ENCODE measurements at regions of chr1 and their contacts with region 1.

Region 1: GRCh38 chr1:193121616-193122593 is at the start of gene CDC73:
- DNase-seq: peak; percentile 95 to 98 (median 96)
- ATAC-seq: peak; percentile 82
- H3K4me3 ChIP-seq: peak within 1 kb of the TSS; percentile 65
- H3K27ac ChIP-seq: peak within 1 kb of the TSS; percentile 97
- H3K4me1 ChIP-seq: peaks cover 12 to 21% of the 10 kb centered on the region in 2 experiments; a peak in 4 of 5 replicates
- H3K27me3 ChIP-seq: no peaks in the 10 kb centered on the region
- CTCF ChIP-seq: peak; percentile 93 to 96 (median 95)
- EP300 ChIP-seq: peak; percentile 53; the same call in 1 of the 2 replicates
- POLR2A ChIP-seq: peak; percentile 98
- RAD21 ChIP-seq: peak; percentile 90 to 93
- polyA plus RNA-seq, gene CDC73: 23.7 to 28.7 TPM

Region 2: DNA sequence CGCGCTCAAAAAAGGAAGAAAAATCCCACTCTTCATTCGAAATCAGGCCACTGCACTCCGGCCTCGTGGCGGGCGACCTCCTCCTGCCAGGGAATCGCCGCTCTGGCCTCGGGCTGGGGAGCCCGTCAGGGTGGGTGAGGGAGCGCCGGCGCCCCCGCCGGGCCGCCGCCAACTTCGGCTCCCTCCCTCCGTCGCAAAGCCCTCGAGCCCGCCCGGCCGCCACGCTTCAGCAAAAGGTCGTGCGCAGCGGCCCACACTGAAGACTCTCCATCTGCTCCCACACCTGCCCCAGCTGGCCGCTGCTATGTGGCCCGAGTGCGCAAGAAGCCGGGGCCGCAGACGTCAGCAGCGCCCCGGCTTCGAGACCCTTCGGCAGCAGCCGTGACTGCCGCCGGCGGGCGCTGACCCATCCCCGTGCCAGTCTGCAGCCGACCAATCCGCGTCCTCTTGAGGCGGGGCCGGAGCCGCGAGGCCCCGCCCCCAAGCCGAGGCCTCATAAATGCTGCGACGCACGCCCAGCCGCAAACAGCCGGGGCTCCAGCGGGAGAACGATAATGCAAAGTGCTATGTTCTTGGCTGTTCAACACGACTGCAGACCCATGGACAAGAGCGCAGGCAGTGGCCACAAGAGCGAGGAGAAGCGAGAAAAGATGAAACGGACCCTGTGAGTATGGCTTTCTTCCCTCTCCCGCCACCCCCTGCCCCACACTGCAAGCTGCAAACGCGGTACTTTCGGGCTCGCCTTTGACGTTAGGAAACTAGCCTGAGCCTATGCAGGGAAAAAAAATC is 313.2 kb before region 1 on chr1 and contains the start of gene RGS2:
- CTCF ChIA-PET with region 1: no interaction called
- POLR2A ChIA-PET with region 1: no interaction called
- in situ Hi-C with region 1: no loop called
- intact Hi-C with region 1: loop called (anchors 2 kb)
- DNase-seq: peak; percentile 93 to 98 (median 98)
- ATAC-seq: peak; percentile 99
- H3K4me3 ChIP-seq: peak within 1 kb of the TSS; percentile 63
- H3K27ac ChIP-seq: peak within 1 kb of the TSS; percentile 24; the same call in 1 of the 3 replicates
- H3K4me1 ChIP-seq: peaks cover 6 to 14% of the 10 kb centered on the region in 2 experiments; a peak in 4 of 5 replicates
- H3K27me3 ChIP-seq: no peaks in the 10 kb centered on the region
- CTCF ChIP-seq: peak in 1 of 3 experiments; percentile 1; a peak in 1 of 6 replicates
- EP300 ChIP-seq: no peak
- POLR2A ChIP-seq: peak; percentile 96
- RAD21 ChIP-seq: no peak; a peak in 1 of 4 replicates
- polyA plus RNA-seq, gene RGS2: 4.7 to 5.4 TPM

Region 3: DNA sequence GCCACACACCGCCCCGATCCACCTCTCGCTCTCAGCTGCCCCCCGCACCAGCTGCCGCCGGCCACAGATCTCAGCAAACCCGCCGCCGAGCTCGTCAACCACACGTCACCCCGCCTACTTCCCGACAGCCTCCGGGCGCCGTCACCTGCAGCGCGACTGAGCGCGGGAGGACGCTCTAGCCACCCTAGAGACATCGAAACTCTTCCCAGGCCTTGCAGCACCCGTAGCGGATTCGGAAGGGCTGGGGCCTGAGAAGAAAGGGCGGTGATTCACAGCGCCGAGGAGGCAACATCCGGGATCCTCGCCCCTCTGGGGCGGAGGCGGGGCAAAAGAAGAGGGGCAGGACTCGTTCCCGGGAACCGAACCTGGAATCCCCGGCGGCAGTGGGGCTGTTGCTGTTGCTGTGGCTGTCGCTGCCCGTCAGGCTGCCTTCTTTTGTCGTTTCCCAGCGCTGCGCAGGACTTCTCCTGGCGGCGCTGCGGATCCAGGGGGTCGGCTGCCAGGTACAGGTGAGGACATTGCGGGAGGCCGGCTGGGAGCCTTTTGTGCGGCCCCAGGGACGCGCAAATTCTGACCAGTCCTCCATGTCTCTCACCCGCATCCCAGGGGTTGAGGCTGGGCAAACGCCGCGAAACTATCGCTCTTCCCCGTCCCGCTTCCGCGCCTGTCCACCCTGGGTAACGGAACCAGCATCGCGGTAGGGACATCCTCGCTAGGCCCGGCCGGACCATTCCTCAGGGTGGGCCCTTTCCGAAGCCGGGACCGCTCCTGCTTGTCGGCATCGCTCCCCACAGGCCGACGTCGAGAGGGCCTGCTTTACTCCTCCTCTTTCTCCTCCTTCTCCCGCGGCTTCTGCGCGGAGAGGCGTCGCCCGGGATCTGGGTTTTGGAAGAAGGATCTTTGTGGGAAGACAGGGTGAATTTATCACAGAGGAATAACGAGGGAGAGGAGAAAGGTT is 62.4 kb before region 1 on chr1 and contains the starts of genes RO60 and UCHL5:
- CTCF ChIA-PET with region 1: interaction called, 3 read pairs
- POLR2A ChIA-PET with region 1: interaction called, 10 read pairs
- in situ Hi-C with region 1: no loop called
- intact Hi-C with region 1: loop called (anchors 1 kb)
- DNase-seq: peak; percentile 89 to 99 (median 92)
- ATAC-seq: peak; percentile 87
- H3K4me3 ChIP-seq: peak within 1 kb of the TSS; percentile 81
- H3K27ac ChIP-seq: peak within 1 kb of the TSS; percentile 94
- H3K4me1 ChIP-seq: peaks cover 10 to 25% of the 10 kb centered on the region in 2 experiments; a peak in 4 of 5 replicates
- H3K27me3 ChIP-seq: no peaks in the 10 kb centered on the region
- CTCF ChIP-seq: peak in 2 of 3 experiments; percentile 26 to 36; a peak in 2 of 6 replicates
- EP300 ChIP-seq: peak; percentile 65
- POLR2A ChIP-seq: peak; percentile 98
- RAD21 ChIP-seq: peak in 1 of 2 experiments; percentile 5; a peak in 1 of 4 replicates
- polyA plus RNA-seq, gene RO60: 49.2 to 187 TPM
- polyA plus RNA-seq, gene UCHL5: 61.0 to 68.9 TPM

Region 4: GRCh38 chr1:193069748-193070385 is 52.0 kb before region 1 on chr1:
- CTCF ChIA-PET with region 1: interaction called, 3 read pairs
- POLR2A ChIA-PET with region 1: interaction called, 3 read pairs
- in situ Hi-C with region 1: no loop called
- intact Hi-C with region 1: loop called (anchors 2 kb)
- DNase-seq: peak; percentile 56 to 63 (median 60)
- ATAC-seq: peak; percentile 59
- H3K4me3 ChIP-seq: no peak overlapping the region
- H3K27ac ChIP-seq: peak overlapping the region; percentile 80; the same call in 2 of the 3 replicates
- H3K4me1 ChIP-seq: peaks cover 15 to 49% of the 10 kb centered on the region in 2 experiments
- H3K27me3 ChIP-seq: no peaks in the 10 kb centered on the region
- CTCF ChIP-seq: peak; percentile 67 to 81 (median 74)
- EP300 ChIP-seq: no peak
- POLR2A ChIP-seq: no peak
- RAD21 ChIP-seq: no peak; a peak in 1 of 4 replicates

Region 5: GRCh38 chr1:193104906-193105820 is 16.7 kb before region 1 on chr1 and contains the start of gene GLRX2:
- CTCF ChIA-PET with region 1: interaction called, 3 read pairs
- POLR2A ChIA-PET with region 1: interaction called, 16 read pairs
- in situ Hi-C with region 1: no loop called
- intact Hi-C with region 1: loop called (anchors 1 kb)
- DNase-seq: peak; percentile 97 to 98 (median 98)
- ATAC-seq: peak; percentile 91
- H3K4me3 ChIP-seq: peak within 1 kb of the TSS; percentile 73
- H3K27ac ChIP-seq: peak within 1 kb of the TSS; percentile 79
- H3K4me1 ChIP-seq: peaks cover 10 to 18% of the 10 kb centered on the region in 2 experiments; a peak in 4 of 5 replicates
- H3K27me3 ChIP-seq: no peaks in the 10 kb centered on the region
- CTCF ChIP-seq: peak in 1 of 3 experiments; percentile 14; a peak in 2 of 6 replicates
- EP300 ChIP-seq: peak; percentile 42; the same call in 1 of the 2 replicates
- POLR2A ChIP-seq: peak; percentile 84
- RAD21 ChIP-seq: peak; percentile 24 to 45; a peak in 3 of 4 replicates
- polyA plus RNA-seq, gene GLRX2: 13.3 to 16.8 TPM

Region 6: GRCh38 chr1:193111641-193112090 is 10.2 kb before region 1 on chr1:
- CTCF ChIA-PET with region 1: interaction called, 3 read pairs
- POLR2A ChIA-PET with region 1: interaction called, 7 read pairs
- in situ Hi-C with region 1: no loop called
- intact Hi-C with region 1: loop called (anchors 1 kb)
- DNase-seq: peak in 1 of 4 experiments; percentile 76
- ATAC-seq: peak; percentile 40
- H3K4me3 ChIP-seq: no peak overlapping the region
- H3K27ac ChIP-seq: peak overlapping the region; percentile 56
- H3K4me1 ChIP-seq: peaks cover 16 to 35% of the 10 kb centered on the region in 2 experiments
- H3K27me3 ChIP-seq: no peaks in the 10 kb centered on the region
- CTCF ChIP-seq: no peak
- EP300 ChIP-seq: peak; percentile 48; the same call in 1 of the 2 replicates
- POLR2A ChIP-seq: no peak
- RAD21 ChIP-seq: no peak

Region 7: GRCh38 chr1:193140254-193140653 is 18.3 kb after region 1 on chr1:
- CTCF ChIA-PET with region 1: no interaction called
- POLR2A ChIA-PET with region 1: interaction called, 18 read pairs
- in situ Hi-C with region 1: no loop called
- intact Hi-C with region 1: no loop called
- DNase-seq: no peak
- ATAC-seq: no peak
- H3K4me3 ChIP-seq: no peak overlapping the region
- H3K27ac ChIP-seq: no peak overlapping the region
- H3K4me1 ChIP-seq: no peaks in the 10 kb centered on the region
- H3K27me3 ChIP-seq: no peaks in the 10 kb centered on the region
- CTCF ChIP-seq: no peak
- EP300 ChIP-seq: no peak
- POLR2A ChIP-seq: no peak
- RAD21 ChIP-seq: no peak

Region 8: GRCh38 chr1:193270996-193271395 is 149.1 kb after region 1 on chr1:
- CTCF ChIA-PET with region 1: no interaction called
- POLR2A ChIA-PET with region 1: no interaction called
- in situ Hi-C with region 1: no loop called
- intact Hi-C with region 1: no loop called
- DNase-seq: no peak
- ATAC-seq: no peak
- H3K4me3 ChIP-seq: no peak overlapping the region
- H3K27ac ChIP-seq: no peak overlapping the region
- H3K4me1 ChIP-seq: no peaks in the 10 kb centered on the region
- H3K27me3 ChIP-seq: no peaks in the 10 kb centered on the region
- CTCF ChIP-seq: no peak
- EP300 ChIP-seq: no peak
- POLR2A ChIP-seq: no peak
- RAD21 ChIP-seq: no peak

Measured in K562 (cell line).